ENCODE measurements at regions of chr4 and their contacts with region 1.

Region 1: GRCh38 chr4:169024762-169025161 is 14.7 kb upstream of the CBR4 start:
- DNase-seq: peak in 1 of 4 experiments; percentile 29
- ATAC-seq: peak; percentile 82
- H3K4me3 ChIP-seq: no peak overlapping the region
- H3K27ac ChIP-seq: no peak overlapping the region
- H3K4me1 ChIP-seq: no peaks in the 10 kb centered on the region
- H3K27me3 ChIP-seq: peaks cover 3 to 4% of the 10 kb centered on the region in 2 experiments; a peak in 2 of 5 replicates
- CTCF ChIP-seq: peak; percentile 35 to 62 (median 44); a peak in 4 of 6 replicates
- EP300 ChIP-seq: no peak
- POLR2A ChIP-seq: no peak
- RAD21 ChIP-seq: peak; percentile 68 to 70

Region 2: DNA sequence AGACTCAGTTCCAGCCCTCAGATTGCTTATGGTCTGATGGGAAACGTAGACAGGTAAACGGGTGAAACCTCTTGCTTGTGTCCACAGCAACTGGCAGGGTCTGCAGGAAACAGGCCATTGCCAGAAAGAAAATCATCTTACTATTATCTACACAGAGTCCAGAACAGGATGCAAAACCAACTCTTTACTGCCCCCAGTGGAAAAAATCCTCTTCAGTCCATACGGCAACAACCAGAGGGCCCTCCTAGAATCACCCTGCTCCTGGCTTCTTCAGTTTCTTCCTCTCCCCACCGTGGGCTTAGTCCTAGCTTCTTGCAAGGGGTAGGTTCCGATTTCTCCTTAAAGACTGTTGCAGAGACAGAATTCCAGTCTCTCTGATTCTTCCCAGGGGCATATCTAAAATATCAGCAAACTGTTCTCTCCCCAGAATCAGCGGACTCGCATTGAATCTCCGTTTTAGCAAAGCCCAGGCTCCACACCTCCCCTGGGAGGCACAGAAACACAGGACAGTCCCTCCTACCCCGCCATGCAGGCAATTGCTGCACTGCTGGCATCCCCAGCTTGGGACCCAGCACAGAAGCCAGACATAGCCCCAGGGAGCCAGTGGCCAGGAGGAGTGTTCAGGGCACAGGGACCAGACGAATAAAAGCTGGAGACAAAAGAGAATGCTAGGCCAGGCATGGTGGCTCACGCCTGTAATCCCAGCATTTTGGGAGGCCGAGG is 287.0 kb after region 1 on chr4:
- CTCF ChIA-PET with region 1: no interaction called
- POLR2A ChIA-PET with region 1: no interaction called
- in situ Hi-C with region 1: no loop called
- intact Hi-C with region 1: loop called (anchors 10 kb)
- DNase-seq: peak; percentile 32 to 57 (median 40)
- ATAC-seq: peak; percentile 99
- H3K4me3 ChIP-seq: no peak overlapping the region
- H3K27ac ChIP-seq: no peak overlapping the region
- H3K4me1 ChIP-seq: no peaks in the 10 kb centered on the region
- H3K27me3 ChIP-seq: no peaks in the 10 kb centered on the region; a peak in 2 of 5 replicates
- CTCF ChIP-seq: peak; percentile 56 to 64 (median 63)
- EP300 ChIP-seq: no peak
- POLR2A ChIP-seq: no peak
- RAD21 ChIP-seq: peak in 1 of 2 experiments; percentile 29; a peak in 2 of 4 replicates

Region 3: GRCh38 chr4:169485791-169486742 is 461.3 kb after region 1 on chr4:
- CTCF ChIA-PET with region 1: interaction called, 5 read pairs
- POLR2A ChIA-PET with region 1: no interaction called
- in situ Hi-C with region 1: loop called (anchors 25 kb)
- intact Hi-C with region 1: loop called (anchors 2 kb)
- DNase-seq: peak in 2 of 4 experiments; percentile 14 to 45
- ATAC-seq: peak; percentile 80
- H3K4me3 ChIP-seq: no peak overlapping the region
- H3K27ac ChIP-seq: no peak overlapping the region
- H3K4me1 ChIP-seq: no peaks in the 10 kb centered on the region
- H3K27me3 ChIP-seq: no peaks in the 10 kb centered on the region
- CTCF ChIP-seq: peak; percentile 36 to 68 (median 44); a peak in 3 of 6 replicates
- EP300 ChIP-seq: no peak
- POLR2A ChIP-seq: no peak
- RAD21 ChIP-seq: peak; percentile 68 to 73

Region 4: GRCh38 chr4:169492438-169493163 is 467.8 kb after region 1 on chr4:
- CTCF ChIA-PET with region 1: interaction called, 3 read pairs
- POLR2A ChIA-PET with region 1: no interaction called
- in situ Hi-C with region 1: loop called (anchors 25 kb)
- intact Hi-C with region 1: loop called (anchors 2 kb)
- DNase-seq: peak; percentile 34 to 43 (median 41)
- ATAC-seq: peak; percentile 77
- H3K4me3 ChIP-seq: no peak overlapping the region
- H3K27ac ChIP-seq: no peak overlapping the region
- H3K4me1 ChIP-seq: no peaks in the 10 kb centered on the region
- H3K27me3 ChIP-seq: no peaks in the 10 kb centered on the region
- CTCF ChIP-seq: peak; percentile 60 to 72 (median 68)
- EP300 ChIP-seq: no peak
- POLR2A ChIP-seq: no peak
- RAD21 ChIP-seq: peak; percentile 36 to 53

Region 5: DNA sequence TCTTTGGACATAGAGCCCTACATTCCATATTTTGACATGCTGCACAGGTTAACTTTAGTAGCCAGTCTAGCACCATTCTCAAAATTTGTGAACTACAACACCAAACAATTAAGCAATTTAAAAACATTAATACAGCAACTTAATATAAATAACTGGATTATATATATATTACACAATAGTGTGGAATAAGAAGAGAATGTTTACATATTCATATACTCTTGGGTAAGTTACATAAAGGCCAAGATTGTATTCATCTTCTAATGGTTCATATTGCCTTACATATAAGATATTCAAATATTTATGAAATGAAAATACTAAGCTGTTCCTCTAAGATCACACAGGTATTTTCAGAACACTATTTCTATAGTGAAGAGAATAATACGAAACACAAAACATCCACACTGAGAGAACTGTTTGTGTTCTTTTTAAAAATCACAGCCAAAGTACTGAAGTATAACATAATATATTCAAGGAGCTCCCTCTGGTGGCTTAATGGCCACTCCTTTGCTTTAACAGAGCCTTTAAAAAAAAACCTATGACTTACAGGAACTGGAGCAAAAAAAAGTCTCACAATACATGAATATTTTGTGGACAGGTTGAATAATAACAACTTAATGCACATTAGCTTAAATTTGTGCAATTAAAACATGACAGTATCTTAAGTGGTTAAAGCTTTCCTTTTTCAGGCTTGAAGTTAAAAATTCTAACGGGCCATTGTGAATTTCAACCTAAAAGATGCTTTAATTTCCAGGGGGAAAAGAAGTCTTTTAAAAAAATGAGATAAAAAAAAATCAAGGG is 541.5 kb after region 1 on chr4:
- CTCF ChIA-PET with region 1: interaction called, 3 read pairs
- POLR2A ChIA-PET with region 1: no interaction called
- in situ Hi-C with region 1: no loop called
- intact Hi-C with region 1: loop called (anchors 10 kb)
- DNase-seq: peak; percentile 18 to 52 (median 21)
- ATAC-seq: peak; percentile 89
- H3K4me3 ChIP-seq: no peak overlapping the region
- H3K27ac ChIP-seq: no peak overlapping the region
- H3K4me1 ChIP-seq: no peaks in the 10 kb centered on the region
- H3K27me3 ChIP-seq: no peaks in the 10 kb centered on the region
- CTCF ChIP-seq: peak; percentile 37 to 70 (median 48); a peak in 4 of 6 replicates
- EP300 ChIP-seq: no peak
- POLR2A ChIP-seq: no peak
- RAD21 ChIP-seq: peak; percentile 56 to 58

Region 6: GRCh38 chr4:169791527-169792156 is 766.9 kb after region 1 on chr4:
- CTCF ChIA-PET with region 1: no interaction called
- POLR2A ChIA-PET with region 1: no interaction called
- in situ Hi-C with region 1: no loop called
- intact Hi-C with region 1: loop called (anchors 10 kb)
- DNase-seq: peak; percentile 11 to 53 (median 27)
- ATAC-seq: peak; percentile 93
- H3K4me3 ChIP-seq: no peak overlapping the region
- H3K27ac ChIP-seq: no peak overlapping the region
- H3K4me1 ChIP-seq: peaks cover 0 to 4% of the 10 kb centered on the region in 2 experiments; a peak in 1 of 5 replicates
- H3K27me3 ChIP-seq: peaks cover 11 to 14% of the 10 kb centered on the region in 2 experiments; a peak in 4 of 5 replicates
- CTCF ChIP-seq: peak; percentile 49 to 57 (median 54); a peak in 5 of 6 replicates
- EP300 ChIP-seq: no peak
- POLR2A ChIP-seq: no peak
- RAD21 ChIP-seq: peak; percentile 11 to 44; a peak in 3 of 4 replicates

Measured in K562 (cell line).